H1 (cell line): ENCODE measurements at regions of chr1 and their contacts with region 1.

Region 1: GRCh38 chr1:226489718-226490425 is 58.7 kb upstream of the STUM start:
- DNase-seq: no peak
- H3K4me3 ChIP-seq: no peak overlapping the region
- H3K27ac ChIP-seq: no peak overlapping the region
- H3K4me1 ChIP-seq: peaks cover 0 to 5% (median 2%) of the 10 kb centered on the region in 4 experiments; a peak in 4 of 7 replicates
- H3K27me3 ChIP-seq: no peaks in the 10 kb centered on the region
- CTCF ChIP-seq: no peak
- EP300 ChIP-seq: no peak
- POLR2A ChIP-seq: no peak
- RAD21 ChIP-seq: no peak

Region 2: GRCh38 chr1:226519716-226520598 is 30.1 kb after region 1 on chr1:
- CTCF ChIA-PET with region 1: interaction called, 11 read pairs
- POLR2A ChIA-PET with region 1: no interaction called
- DNase-seq: no peak
- H3K4me3 ChIP-seq: peak overlapping the region in 3 of 4 experiments; percentile 26 to 30 (median 30); a peak in 4 of 8 replicates
- H3K27ac ChIP-seq: no peak overlapping the region
- H3K4me1 ChIP-seq: peaks cover 6 to 22% (median 9%) of the 10 kb centered on the region in 4 experiments
- H3K27me3 ChIP-seq: peaks cover 0 to 3% (median 0%) of the 10 kb centered on the region in 4 experiments; a peak in 2 of 7 replicates
- CTCF ChIP-seq: peak; percentile 51 to 76 (median 76)
- EP300 ChIP-seq: no peak
- POLR2A ChIP-seq: no peak
- RAD21 ChIP-seq: peak; percentile 39 to 65; a peak in 3 of 4 replicates